Activated T-helper 2 cell treated with anti-CD3 and anti-CD28 coated beads, Interferon-gamma antibody, Interleukin-2, Interleukin-4, amounts not matched to agents 10 μg/mL and 5 μg/mL and 100 μg/mL, durations not matched to agents 14 hours and 24 hours and 36 hours (primary cell): ENCODE measurements at regions of chr12 and their contacts with region 1.

Region 1: GRCh38 chr12:64759035-64759901 is at the start of gene GNS:
- DNase-seq: peak; percentile 94
- H3K4me3 Mint-ChIP-seq: peak within 1 kb of the TSS; percentile 94
- H3K27ac Mint-ChIP-seq: peak within 1 kb of the TSS; percentile 93
- H3K4me1 Mint-ChIP-seq: peaks cover 33% of the 10 kb centered on the region
- H3K27me3 Mint-ChIP-seq: peaks cover 7% of the 10 kb centered on the region
- total RNA-seq, gene GNS: 33.9 and 38.2 TPM in 2 replicates

Region 2: GRCh38 chr12:63779498-63780481 is 979.5 kb before region 1 on chr12 and contains the start of gene RXYLT1:
- intact Hi-C with region 1: loop called (anchors 10 kb)
- DNase-seq: peak; percentile 79
- H3K4me3 Mint-ChIP-seq: peak within 1 kb of the TSS; percentile 94
- H3K27ac Mint-ChIP-seq: peak within 1 kb of the TSS; percentile 95
- H3K4me1 Mint-ChIP-seq: peaks cover 16% of the 10 kb centered on the region
- H3K27me3 Mint-ChIP-seq: peaks cover 8% of the 10 kb centered on the region
- total RNA-seq, gene RXYLT1: 22.0 and 23.3 TPM in 2 replicates

Region 3: DNA sequence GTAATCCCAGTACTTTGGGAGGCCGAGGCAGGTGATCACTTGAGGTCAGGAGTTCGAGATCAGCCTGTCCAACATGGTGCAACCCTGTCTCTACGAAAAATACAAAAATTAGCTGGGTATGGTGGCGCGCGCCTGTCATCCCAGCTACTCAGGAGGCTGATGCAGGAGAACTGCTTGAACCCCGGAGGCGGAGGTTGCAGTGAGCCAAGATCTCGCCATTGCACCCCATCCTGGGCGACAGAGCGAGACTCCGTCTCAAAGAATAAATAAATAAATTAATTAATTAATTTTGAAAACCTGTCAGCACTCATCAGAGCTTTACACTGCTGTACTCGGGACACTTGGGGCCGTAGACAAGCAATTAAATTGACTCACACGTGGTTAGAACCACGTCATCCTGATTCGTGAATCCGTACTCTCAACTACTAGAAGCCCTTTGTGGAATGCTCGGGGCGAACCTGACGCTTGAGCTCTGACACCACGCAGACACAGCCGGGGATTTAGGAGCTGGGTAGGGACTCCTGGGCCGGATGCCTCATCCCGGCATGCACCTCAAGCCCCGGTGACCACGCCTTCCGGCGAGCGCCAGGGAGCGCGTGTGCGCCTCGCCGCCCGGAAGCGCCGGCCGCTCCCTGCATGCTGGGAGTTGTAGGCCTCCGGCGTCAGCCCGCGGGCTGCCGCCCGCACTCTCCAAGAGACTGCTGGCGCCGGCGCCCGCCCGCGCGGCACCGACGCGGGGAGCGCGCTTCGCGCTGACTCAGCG is 355.4 kb before region 1 on chr12 and contains the start of gene XPOT:
- intact Hi-C with region 1: loop called (anchors 2 kb)
- DNase-seq: peak; percentile 92
- H3K4me3 Mint-ChIP-seq: peak within 1 kb of the TSS; percentile 93
- H3K27ac Mint-ChIP-seq: peak within 1 kb of the TSS; percentile 97
- H3K4me1 Mint-ChIP-seq: peaks cover 31% of the 10 kb centered on the region
- H3K27me3 Mint-ChIP-seq: no peaks in the 10 kb centered on the region
- total RNA-seq, gene XPOT: 119 and 120 TPM in 2 replicates

Region 4: GRCh38 chr12:64610149-64610678 is 149.1 kb before region 1 on chr12 and contains the start of gene RASSF3:
- intact Hi-C with region 1: loop called (anchors 2 kb)
- DNase-seq: peak; percentile 76
- H3K4me3 Mint-ChIP-seq: peak within 1 kb of the TSS; percentile 92
- H3K27ac Mint-ChIP-seq: peak within 1 kb of the TSS; percentile 87
- H3K4me1 Mint-ChIP-seq: peaks cover 29% of the 10 kb centered on the region
- H3K27me3 Mint-ChIP-seq: no peaks in the 10 kb centered on the region
- total RNA-seq, gene RASSF3: 35.7 and 35.8 TPM in 2 replicates

Region 5: GRCh38 chr12:64669270-64669842 is 89.9 kb before region 1 on chr12:
- intact Hi-C with region 1: loop called (anchors 5 kb)
- DNase-seq: peak; percentile 43
- H3K4me3 Mint-ChIP-seq: peak overlapping the region; percentile 87
- H3K27ac Mint-ChIP-seq: peak overlapping the region; percentile 97
- H3K4me1 Mint-ChIP-seq: peaks cover 87% of the 10 kb centered on the region
- H3K27me3 Mint-ChIP-seq: no peaks in the 10 kb centered on the region

Region 6: DNA sequence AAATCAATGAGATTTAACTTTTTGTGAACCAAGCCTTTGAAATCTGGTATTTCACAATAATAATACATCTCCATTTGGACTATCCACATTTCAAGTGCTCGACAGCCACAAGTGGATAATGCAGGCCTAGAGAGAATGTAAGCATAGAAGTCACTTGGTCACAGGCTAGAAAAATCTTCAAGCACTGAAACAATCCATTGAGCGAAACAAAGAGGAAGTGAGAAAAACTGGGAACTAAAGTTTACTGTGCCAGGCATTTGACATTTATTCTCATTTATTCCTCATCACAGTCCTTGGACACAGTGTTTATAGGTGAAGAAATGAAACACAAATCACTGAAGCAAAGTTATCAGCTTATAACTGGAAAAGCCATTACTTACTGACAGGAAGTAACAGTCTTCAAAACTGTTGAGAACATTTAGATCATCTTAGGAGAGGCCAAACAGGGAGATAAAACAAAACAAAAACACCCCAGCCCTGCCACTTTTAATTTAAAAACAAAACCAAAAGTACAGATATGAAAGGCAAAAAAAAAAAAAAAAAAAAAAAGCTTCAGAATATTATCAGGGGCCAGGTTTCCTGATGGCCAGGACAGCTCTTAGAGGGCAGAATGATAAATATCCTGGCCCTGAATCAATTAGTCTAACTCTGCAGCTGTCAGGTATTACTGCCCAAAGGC is 29.2 kb before region 1 on chr12:
- intact Hi-C with region 1: loop called (anchors 1 kb)
- DNase-seq: no peak
- H3K4me3 Mint-ChIP-seq: no peak overlapping the region
- H3K27ac Mint-ChIP-seq: peak overlapping the region; percentile 83
- H3K4me1 Mint-ChIP-seq: peaks cover 19% of the 10 kb centered on the region
- H3K27me3 Mint-ChIP-seq: no peaks in the 10 kb centered on the region

Region 7: DNA sequence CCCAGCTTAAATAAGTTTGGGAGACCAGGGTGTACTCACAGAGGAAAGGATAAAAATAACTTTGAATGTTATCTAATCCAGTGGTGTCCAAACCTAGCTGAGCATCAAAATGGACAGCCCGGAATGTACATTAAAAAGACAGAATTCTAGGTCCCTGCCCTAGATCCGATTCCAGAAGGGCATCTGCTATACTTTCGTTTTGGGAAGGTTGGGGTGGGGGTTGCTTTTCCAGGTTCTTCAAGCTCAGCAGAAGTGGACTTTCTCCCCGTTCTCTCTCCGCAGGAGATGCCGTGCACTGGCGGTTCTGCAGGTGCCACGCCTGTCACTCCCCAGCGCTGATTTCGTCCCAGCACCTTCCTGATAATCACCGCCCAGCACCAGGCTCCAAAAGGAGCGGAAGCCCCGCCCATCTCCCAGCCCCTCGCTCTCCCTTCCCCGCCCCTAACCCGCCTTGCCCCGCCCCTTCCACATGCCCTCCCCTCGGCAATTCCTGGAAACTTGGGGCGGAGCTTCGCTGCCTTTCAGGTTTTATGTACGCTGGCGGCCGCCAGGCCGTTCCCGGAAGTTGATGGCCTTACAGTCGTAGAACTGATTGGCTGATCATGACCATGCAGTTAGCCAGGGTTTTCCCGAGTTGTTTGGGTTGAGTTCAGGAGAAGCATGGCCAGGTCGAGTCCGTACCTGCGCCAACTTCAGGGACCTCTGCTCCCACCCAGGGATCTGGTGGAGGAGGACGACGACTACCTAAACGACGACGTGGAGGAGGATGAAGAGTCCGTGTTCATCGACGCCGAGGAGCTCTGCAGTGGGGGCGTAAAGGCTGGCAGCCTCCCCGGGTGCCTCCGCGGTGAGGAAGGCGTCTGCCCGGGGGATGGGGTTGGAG is 1542.9 kb after region 1 on chr12 and contains the start of gene HELB:
- intact Hi-C with region 1: loop called (anchors 5 kb)
- DNase-seq: peak; percentile 91
- H3K4me3 Mint-ChIP-seq: peak within 1 kb of the TSS; percentile 98
- H3K27ac Mint-ChIP-seq: peak within 1 kb of the TSS; percentile 99
- H3K4me1 Mint-ChIP-seq: peaks cover 48% of the 10 kb centered on the region
- H3K27me3 Mint-ChIP-seq: peaks cover 2% of the 10 kb centered on the region
- total RNA-seq, gene HELB: 17.1 and 18.2 TPM in 2 replicates